SK-N-SH (cell line): ENCODE measurements at regions of chr16 and their contacts with region 1.

Region 1: DNA sequence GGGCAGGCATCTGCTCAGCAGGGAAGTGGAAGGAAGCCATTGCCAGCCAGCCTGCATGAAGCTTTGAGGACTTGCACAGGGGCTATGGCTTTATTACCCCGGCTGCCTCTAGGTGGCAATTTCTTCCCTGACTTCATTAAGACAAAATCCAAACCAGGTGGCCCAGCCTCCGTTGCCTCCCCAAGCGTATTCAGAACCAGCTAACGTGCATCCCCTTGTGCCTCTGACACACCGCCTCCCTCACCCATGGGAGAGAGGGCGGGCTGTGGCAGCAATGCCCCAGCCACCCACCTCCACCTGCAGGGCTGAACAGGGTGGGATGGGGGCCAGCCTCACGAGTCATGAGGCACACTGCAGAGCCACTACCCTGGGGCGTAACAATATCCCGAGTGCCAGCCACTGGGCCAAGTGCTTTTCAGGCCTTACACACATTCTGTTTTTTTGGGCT is 6.8 kb downstream of the KIFC3 start:
- DNase-seq: peak; percentile 80
- H3K4me3 ChIP-seq: no peak overlapping the region; a peak in 1 of 4 replicates
- H3K27ac ChIP-seq: no peak overlapping the region
- H3K4me1 ChIP-seq: peaks cover 7 to 9% of the 10 kb centered on the region in 2 experiments; a peak in 2 of 4 replicates
- H3K27me3 ChIP-seq: no peaks in the 10 kb centered on the region
- CTCF ChIP-seq: peak; percentile 42
- EP300 ChIP-seq: no peak
- RAD21 ChIP-seq: peak; percentile 62

Region 2: GRCh38 chr16:57380671-57381462 is 414.6 kb before region 1 on chr16:
- CTCF ChIA-PET with region 1: no interaction called
- POLR2A ChIA-PET with region 1: no interaction called
- DNase-seq: no peak
- H3K4me3 ChIP-seq: no peak overlapping the region
- H3K27ac ChIP-seq: no peak overlapping the region
- H3K4me1 ChIP-seq: peaks cover 15 to 35% of the 10 kb centered on the region in 2 experiments; a peak in 3 of 4 replicates
- H3K27me3 ChIP-seq: no peaks in the 10 kb centered on the region
- CTCF ChIP-seq: no peak
- EP300 ChIP-seq: no peak
- RAD21 ChIP-seq: no peak

Region 3: DNA sequence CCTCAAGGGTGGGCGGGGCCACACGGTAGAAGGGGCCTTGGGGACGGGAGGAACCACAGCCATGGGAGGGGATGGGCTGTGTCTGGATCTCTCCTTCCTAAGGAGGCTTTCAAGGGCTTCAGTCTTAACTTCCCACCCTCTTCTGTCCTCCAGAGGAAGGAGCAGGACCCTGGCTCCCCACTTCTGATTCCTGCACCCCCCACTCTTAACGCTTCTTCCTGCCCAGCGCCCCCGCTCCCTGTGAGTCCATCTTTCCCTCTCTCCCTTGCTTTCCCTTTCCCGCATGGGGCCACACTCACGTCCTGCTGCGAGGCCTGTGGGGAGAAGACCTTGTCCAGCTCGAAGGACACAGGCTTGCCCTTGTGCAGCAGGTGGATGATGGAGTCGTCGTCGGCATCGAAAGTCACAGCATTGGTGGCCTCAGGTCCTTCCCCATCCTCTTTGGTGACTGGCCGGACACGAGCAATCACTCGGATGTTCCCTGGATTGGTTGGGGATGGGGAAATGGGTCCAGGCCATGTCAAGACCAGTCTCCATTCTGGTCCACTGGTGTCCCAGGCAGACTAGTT is 30.2 kb before region 1 on chr16:
- CTCF ChIA-PET with region 1: interaction called, 11 read pairs
- POLR2A ChIA-PET with region 1: no interaction called
- DNase-seq: no peak
- H3K4me3 ChIP-seq: no peak overlapping the region
- H3K27ac ChIP-seq: no peak overlapping the region; a peak in 1 of 4 replicates
- H3K4me1 ChIP-seq: peaks cover 4 to 16% of the 10 kb centered on the region in 2 experiments; a peak in 3 of 4 replicates
- H3K27me3 ChIP-seq: no peaks in the 10 kb centered on the region
- CTCF ChIP-seq: no peak
- EP300 ChIP-seq: no peak
- RAD21 ChIP-seq: no peak

Region 4: DNA sequence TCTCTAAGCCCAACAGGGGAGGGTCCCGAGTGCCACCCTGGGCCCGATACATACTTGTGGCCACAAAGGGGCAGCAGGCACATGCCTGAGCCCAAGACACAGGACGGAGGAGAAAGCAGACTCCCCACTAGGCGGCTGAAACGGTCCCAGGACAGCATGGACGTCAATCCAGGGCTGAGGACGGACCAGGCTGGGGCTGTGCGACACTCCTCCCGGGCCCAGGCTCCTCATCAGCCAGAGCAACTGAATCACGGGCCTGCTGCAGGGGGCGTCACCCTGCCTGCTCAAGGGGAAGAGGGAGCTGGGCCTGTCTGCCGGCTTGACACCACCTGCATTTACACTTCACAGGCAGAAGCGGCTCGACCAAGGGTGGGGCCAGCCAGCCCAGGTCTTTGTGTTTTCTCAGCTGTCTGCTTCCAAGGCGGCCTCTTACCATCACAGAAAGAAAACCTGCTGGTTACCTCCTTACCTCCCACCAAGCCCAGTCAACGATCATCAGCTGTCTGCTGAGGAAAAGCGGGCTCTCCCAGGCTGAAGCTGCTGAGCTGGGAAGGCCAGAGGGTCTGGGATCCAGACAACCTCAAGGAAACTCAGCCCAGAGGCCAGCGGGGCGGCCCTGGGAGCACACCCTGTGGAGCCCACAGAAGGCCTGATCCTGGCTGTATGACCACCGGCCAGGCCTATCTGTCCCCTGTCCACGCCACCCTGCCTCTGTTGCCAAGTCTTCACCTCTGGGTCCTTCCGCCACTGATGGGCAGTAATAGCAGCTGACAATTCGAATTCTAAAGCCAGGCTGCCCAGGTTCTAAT is 19.6 kb before region 1 on chr16:
- CTCF ChIA-PET with region 1: interaction called, 10 read pairs
- POLR2A ChIA-PET with region 1: interaction called, 3 read pairs
- DNase-seq: peak; percentile 58
- H3K4me3 ChIP-seq: no peak overlapping the region
- H3K27ac ChIP-seq: no peak overlapping the region
- H3K4me1 ChIP-seq: no peaks in the 10 kb centered on the region
- H3K27me3 ChIP-seq: no peaks in the 10 kb centered on the region
- CTCF ChIP-seq: no peak
- EP300 ChIP-seq: no peak
- RAD21 ChIP-seq: peak; percentile 50

Region 5: GRCh38 chr16:57863434-57864160 is 68.1 kb after region 1 on chr16:
- CTCF ChIA-PET with region 1: interaction called, 20 read pairs
- POLR2A ChIA-PET with region 1: no interaction called
- DNase-seq: peak; percentile 56
- H3K4me3 ChIP-seq: no peak overlapping the region
- H3K27ac ChIP-seq: no peak overlapping the region
- H3K4me1 ChIP-seq: peaks cover 3 to 17% of the 10 kb centered on the region in 2 experiments
- H3K27me3 ChIP-seq: no peaks in the 10 kb centered on the region
- CTCF ChIP-seq: peak; percentile 75
- EP300 ChIP-seq: no peak
- RAD21 ChIP-seq: peak; percentile 80